AG04450 (cell line): ENCODE measurements at regions of chr1 and their contacts with region 1.

Region 1: DNA sequence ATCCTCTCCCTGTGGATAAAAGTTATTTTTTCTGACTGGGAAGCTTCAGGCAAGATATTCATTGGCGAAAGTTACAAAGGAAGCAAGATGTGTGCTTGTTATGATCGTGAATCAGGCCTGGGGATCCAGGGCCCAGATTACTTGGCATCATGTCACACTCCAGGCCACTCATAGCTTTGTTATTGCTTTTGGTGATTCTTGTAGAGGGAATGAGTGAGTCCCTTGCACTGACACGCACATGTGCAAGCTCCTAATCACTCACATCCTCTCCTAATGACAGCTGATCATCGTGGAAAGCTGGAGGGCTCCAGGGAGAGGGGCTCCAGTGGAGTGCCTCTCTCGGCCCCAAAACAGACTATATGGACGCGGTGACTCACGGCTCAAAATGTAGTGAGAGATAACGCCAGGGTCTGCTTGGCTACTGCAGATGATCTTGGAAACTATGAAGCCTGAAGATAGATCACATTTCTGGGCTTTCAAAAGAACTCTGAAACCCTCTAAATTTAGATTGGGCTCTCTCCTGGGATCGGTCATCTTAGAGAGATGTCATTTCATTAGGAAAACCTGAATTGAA is 481.1 kb upstream of the USP24 start:
- DNase-seq: peak; percentile 88
- H3K4me3 ChIP-seq: no peak overlapping the region
- H3K27ac ChIP-seq: peak overlapping the region; percentile 83
- H3K27me3 ChIP-seq: no peaks in the 10 kb centered on the region
- CTCF ChIP-seq: no peak

Region 2: GRCh38 chr1:55362558-55362957 is 333.7 kb before region 1 on chr1:
- CTCF ChIA-PET with region 1: no interaction called
- POLR2A ChIA-PET with region 1: no interaction called
- DNase-seq: peak; percentile 10
- H3K4me3 ChIP-seq: no peak overlapping the region
- H3K27ac ChIP-seq: peak overlapping the region; percentile 22
- H3K27me3 ChIP-seq: no peaks in the 10 kb centered on the region
- CTCF ChIP-seq: no peak

Region 3: DNA sequence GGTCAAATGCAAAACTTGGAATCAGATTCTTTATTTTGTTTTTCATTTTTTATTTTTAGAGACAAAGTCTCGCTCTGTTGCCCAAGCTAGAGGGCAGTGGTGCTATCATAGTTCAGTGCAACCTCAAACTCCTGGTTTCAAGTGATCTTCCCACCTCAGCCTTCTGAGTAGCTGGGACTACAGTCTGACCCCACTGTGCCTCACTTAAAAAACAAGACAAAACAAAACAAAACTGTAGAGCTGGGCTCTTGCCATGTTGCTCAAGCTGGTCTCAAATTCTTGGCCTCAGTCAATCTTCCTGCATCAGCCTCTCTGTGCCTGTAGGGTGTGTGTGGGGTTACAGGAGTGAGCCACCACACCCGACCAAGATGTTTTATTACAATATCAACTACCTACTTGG is 85.1 kb before region 1 on chr1:
- CTCF ChIA-PET with region 1: no interaction called
- POLR2A ChIA-PET with region 1: no interaction called
- DNase-seq: no peak
- H3K4me3 ChIP-seq: no peak overlapping the region
- H3K27ac ChIP-seq: no peak overlapping the region
- H3K27me3 ChIP-seq: no peaks in the 10 kb centered on the region
- CTCF ChIP-seq: no peak; the same call in 1 of the 2 replicates

Region 4: GRCh38 chr1:55718758-55719671 is 22.7 kb after region 1 on chr1:
- CTCF ChIA-PET with region 1: no interaction called
- POLR2A ChIA-PET with region 1: interaction called, 35 read pairs
- DNase-seq: peak; percentile 99
- H3K4me3 ChIP-seq: no peak overlapping the region
- H3K27ac ChIP-seq: peak overlapping the region; percentile 97
- H3K27me3 ChIP-seq: no peaks in the 10 kb centered on the region
- CTCF ChIP-seq: 0 out of 2 replicates have a peak, but pooled peaks have one; percentile 32

Region 5: GRCh38 chr1:55741516-55741915 is 45.2 kb after region 1 on chr1:
- CTCF ChIA-PET with region 1: no interaction called
- POLR2A ChIA-PET with region 1: no interaction called
- DNase-seq: peak; percentile 72
- H3K4me3 ChIP-seq: no peak overlapping the region
- H3K27ac ChIP-seq: no peak overlapping the region
- H3K27me3 ChIP-seq: no peaks in the 10 kb centered on the region
- CTCF ChIP-seq: 0 out of 2 replicates have a peak, but pooled peaks have one; percentile 15

Region 6: GRCh38 chr1:55848906-55849305 is 152.6 kb after region 1 on chr1:
- CTCF ChIA-PET with region 1: no interaction called
- POLR2A ChIA-PET with region 1: no interaction called
- DNase-seq: no peak
- H3K4me3 ChIP-seq: no peak overlapping the region
- H3K27ac ChIP-seq: no peak overlapping the region
- H3K27me3 ChIP-seq: no peaks in the 10 kb centered on the region
- CTCF ChIP-seq: peak; percentile 53